Activated CD4-positive, alpha-beta memory T cell treated with anti-CD3 and anti-CD28 coated beads, Interleukin-2, amount 10 ng/mL, durations not matched to agents 7 days and 5 days (primary cell): ENCODE measurements at regions of chr1 and their contacts with region 1.

Region 1: GRCh38 chr1:167936068-167936929 is at the start of gene DCAF6:
- DNase-seq: peak; percentile 97
- H3K4me3 Mint-ChIP-seq: peak within 1 kb of the TSS; percentile 88
- H3K27ac Mint-ChIP-seq: peak within 1 kb of the TSS; percentile 93
- H3K4me1 Mint-ChIP-seq: peaks cover 34% of the 10 kb centered on the region
- H3K27me3 Mint-ChIP-seq: no peaks in the 10 kb centered on the region
- total RNA-seq, gene DCAF6: 26.4 to 27.1 TPM

Region 2: DNA sequence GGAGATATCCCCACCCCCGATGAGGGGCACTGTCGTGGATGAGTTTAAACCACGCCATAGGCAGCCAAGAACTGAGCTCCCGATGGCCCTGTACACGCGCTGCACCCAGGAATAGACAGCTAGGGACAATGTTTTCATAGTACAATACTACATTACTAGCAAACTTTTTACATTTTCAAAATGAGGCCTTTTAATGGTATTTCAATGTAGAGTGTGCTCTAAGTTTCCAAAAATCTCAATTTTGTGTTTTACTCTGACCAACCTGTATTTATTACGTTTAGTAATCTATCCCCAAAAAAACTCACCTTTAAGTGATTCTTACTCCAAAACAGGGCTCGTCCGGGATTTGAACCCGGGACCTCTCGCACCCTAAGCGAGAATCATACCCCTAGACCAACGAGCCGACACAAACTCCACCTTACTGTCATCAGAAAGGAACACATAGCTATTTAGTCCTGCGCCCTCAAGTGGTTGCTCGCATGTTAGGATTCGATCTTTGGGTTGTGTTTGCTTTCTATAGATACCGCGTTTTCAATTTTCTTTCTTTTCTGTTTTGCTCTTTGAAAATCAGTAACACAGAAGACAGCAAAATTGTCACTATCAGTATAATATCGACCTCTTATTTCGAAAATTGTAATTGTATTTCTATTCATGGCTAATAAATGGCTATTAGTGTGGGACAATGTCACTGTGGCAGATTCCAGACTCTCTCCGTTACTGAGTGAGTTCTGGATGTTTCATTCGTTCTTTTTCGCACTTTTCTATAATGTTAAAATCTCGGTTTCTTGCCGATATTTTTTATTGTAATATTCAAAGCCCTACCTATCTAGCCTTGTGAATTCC is 220.9 kb before region 1 on chr1:
- CTCF ChIA-PET with region 1: interaction called, 27 read pairs
- POLR2A ChIA-PET with region 1: interaction called, 67 read pairs
- DNase-seq: peak; percentile 92
- H3K4me3 Mint-ChIP-seq: peak overlapping the region; percentile 84
- H3K27ac Mint-ChIP-seq: peak overlapping the region; percentile 92
- H3K4me1 Mint-ChIP-seq: peaks cover 46% of the 10 kb centered on the region
- H3K27me3 Mint-ChIP-seq: peaks cover 7% of the 10 kb centered on the region

Region 3: DNA sequence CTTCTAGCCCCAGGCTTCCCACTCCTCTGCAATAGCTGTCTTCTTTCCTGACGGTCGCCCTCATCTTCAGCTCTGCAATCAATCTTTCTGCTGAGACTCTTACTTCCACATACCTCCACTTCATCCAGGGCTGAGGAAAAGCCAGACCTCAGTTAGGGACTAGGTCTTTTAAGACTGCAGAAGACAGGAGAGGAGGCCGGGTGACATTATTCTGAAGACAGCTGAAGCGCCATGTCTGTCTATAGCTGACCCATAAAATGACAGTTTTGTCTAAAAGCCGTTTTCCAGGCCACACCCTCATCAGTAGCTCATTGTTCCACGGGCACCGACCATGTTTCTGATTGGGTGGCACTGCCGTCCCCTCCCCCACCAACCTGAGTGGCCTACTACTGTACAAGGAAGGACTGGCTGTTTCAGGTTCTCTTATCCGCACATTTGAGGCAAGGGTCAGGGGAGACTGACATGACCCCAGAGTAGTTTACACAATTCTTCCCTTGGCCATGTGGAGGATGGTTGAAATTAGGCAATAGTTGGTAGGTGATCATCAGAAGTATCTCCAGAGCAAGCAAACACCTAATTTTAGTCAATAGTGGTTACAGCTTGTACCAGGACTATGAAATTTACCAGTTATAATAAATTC is 22.3 kb before region 1 on chr1 and contains the start of gene ADCY10:
- CTCF ChIA-PET with region 1: no interaction called
- POLR2A ChIA-PET with region 1: interaction called, 11 read pairs
- DNase-seq: no peak
- H3K4me3 Mint-ChIP-seq: no peak within 1 kb of the TSS
- H3K27ac Mint-ChIP-seq: no peak within 1 kb of the TSS
- H3K4me1 Mint-ChIP-seq: no peaks in the 10 kb centered on the region
- H3K27me3 Mint-ChIP-seq: peaks cover 7% of the 10 kb centered on the region
- total RNA-seq, gene ADCY10: 0.05 to 0.13 TPM

Region 4: DNA sequence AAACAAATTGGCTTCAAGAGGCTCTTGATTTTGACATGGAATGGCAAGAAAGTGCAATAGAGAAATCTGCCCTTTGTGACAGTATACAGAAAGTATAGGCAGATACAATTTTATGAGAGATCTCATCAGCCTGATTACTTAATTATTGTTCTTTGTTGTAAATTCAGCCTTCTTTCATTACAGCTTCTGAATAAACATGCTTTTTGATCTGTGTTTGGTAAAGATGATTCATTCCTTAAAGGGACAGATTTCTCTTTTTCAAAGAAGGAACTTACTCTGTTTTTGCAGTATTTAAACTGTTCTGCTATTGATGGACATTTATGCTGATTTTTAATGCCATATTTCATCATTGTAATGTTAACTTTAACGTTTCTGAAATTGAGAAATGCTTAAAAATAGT is 14.3 kb after region 1 on chr1:
- CTCF ChIA-PET with region 1: interaction called, 3 read pairs
- POLR2A ChIA-PET with region 1: interaction called, 12 read pairs
- DNase-seq: no peak
- H3K4me3 Mint-ChIP-seq: no peak overlapping the region
- H3K27ac Mint-ChIP-seq: no peak overlapping the region
- H3K4me1 Mint-ChIP-seq: peaks cover 16% of the 10 kb centered on the region
- H3K27me3 Mint-ChIP-seq: no peaks in the 10 kb centered on the region

Region 5: DNA sequence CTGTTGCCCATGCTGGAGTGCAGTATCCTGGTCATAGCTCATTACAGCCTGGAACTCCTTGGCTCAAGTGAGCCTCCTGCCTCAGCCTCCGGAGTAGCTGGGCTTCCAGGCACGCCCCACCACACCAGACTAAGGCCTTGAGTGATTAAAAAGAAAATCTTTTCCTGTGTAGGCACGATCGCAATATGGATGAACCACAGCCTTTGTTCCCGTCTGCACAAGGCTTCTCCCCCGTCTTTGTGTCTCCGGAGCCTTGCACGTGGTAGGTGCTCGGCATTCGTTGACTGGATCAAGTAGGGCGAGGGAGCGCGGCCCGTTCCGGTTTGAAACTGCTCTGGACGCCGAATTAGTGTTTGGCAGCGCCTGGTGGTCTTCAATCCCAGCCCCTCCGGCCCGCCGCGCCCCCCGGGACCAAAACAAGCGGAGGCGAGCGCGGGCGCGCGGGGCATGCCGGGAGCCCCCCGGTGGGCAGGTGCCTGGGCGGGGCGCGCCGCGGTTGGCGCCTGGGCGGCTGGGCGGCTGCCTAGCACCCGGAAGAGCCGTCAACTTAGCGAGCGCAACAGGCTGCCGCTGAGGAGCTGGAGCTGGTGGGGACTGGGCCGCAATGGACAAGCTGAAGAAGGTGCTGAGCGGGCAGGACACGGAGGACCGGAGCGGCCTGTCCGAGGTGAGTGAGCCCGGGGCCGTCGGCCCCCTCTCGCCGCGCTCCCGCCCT is 289.3 kb after region 1 on chr1 and contains the start of gene SFT2D2:
- CTCF ChIA-PET with region 1: no interaction called
- POLR2A ChIA-PET with region 1: interaction called, 19 read pairs
- DNase-seq: peak; percentile 84
- H3K4me3 Mint-ChIP-seq: peak within 1 kb of the TSS; percentile 95
- H3K27ac Mint-ChIP-seq: peak within 1 kb of the TSS; percentile 84
- H3K4me1 Mint-ChIP-seq: peaks cover 53% of the 10 kb centered on the region
- H3K27me3 Mint-ChIP-seq: peaks cover 8% of the 10 kb centered on the region
- total RNA-seq, gene SFT2D2: 65.6 to 72.1 TPM